Activated B cell treated with CpG ODN at 0.5 μM for 24 hours (primary cell): ENCODE measurements at regions of chr2 and their contacts with region 1.

Region 1: DNA sequence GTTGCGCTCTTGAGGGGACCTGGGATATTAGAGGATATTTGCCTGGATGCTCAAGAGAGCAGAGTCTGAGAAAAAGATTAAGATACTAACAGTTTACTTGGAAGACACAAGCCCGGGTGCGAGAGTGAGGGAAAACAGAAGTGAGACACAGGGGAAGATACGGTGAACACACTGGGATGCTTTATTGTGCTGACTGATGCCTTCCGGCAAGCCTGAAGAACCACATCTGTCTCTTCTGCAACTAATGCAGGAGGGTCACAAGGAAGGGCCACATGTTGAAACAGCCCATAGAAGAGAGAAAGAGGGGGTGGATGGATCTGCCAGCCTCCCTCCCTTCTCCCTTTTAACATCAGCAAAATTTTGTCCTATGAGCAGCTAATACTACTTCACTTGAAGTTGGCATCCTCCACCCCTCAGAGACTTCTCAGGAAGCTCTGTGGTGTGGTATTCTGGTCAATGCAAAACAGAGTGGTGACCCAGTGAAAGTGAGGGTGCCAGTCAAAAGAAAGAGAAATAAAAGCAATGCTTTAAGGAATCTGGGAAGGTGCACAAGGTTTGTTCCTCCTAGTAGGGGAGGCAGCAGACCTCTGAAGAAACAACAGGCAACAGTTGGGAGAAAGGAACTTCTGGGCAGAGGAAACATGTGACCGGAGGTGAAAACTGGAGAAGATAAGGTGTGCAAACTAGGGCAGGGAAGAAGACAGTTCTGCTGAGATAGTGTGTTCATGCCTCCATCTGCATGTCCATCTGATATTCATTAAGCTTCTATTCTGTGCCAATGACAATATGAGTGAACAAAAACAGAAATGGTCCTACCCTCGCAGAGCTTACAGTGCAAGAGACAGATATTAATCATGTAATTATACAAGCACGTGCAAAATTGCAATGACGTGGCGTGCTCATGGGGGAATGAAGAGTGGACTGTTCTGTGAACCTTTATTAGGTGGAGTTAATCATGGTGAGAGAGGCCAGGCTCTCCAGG is 107.1 kb downstream of the LYPD6B start:
- DNase-seq: no peak
- ATAC-seq: peak; percentile 47
- H3K4me3 Mint-ChIP-seq: peak overlapping the region; percentile 40
- H3K27ac Mint-ChIP-seq: no peak overlapping the region
- H3K4me1 Mint-ChIP-seq: peaks cover 15% of the 10 kb centered on the region
- H3K27me3 Mint-ChIP-seq: peaks cover 16% of the 10 kb centered on the region
- CTCF ChIP-seq: no peak

Region 2: GRCh38 chr2:149132339-149132738 is 13.3 kb before region 1 on chr2:
- CTCF ChIA-PET with region 1: no interaction called
- POLR2A ChIA-PET with region 1: no interaction called
- intact Hi-C with region 1: no loop called
- DNase-seq: no peak
- ATAC-seq: no peak
- H3K4me3 Mint-ChIP-seq: no peak overlapping the region
- H3K27ac Mint-ChIP-seq: no peak overlapping the region
- H3K4me1 Mint-ChIP-seq: peaks cover 5% of the 10 kb centered on the region
- H3K27me3 Mint-ChIP-seq: peaks cover 19% of the 10 kb centered on the region
- CTCF ChIP-seq: no peak

Region 3: DNA sequence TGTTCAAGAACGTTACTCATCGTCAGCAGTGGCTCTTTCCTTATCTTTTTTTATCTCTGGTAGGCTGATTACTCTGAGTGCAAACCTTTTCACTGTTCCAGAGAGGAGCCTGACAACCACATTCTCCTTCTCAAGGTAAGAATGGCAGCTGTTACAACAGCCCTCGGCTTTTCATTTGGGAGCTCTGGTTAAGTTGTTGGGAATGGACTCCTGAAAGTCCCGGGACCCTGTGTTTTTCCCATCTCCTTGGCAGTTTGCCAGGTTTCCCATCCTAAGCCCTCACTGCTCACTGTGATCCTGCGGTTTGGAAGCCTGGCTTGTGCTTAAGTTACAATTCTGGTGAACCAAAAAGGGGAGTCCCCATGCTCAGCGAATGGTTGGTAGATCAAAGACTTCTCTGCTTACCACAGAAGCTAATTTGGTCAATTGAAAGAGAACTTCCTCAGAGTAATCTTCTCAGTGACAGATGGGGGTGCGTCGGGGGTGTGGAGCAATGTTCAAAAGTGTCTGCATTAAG is 15.2 kb after region 1 on chr2:
- CTCF ChIA-PET with region 1: no interaction called
- POLR2A ChIA-PET with region 1: no interaction called
- intact Hi-C with region 1: loop called (anchors 1 kb)
- DNase-seq: no peak
- ATAC-seq: peak; percentile 77
- H3K4me3 Mint-ChIP-seq: no peak overlapping the region
- H3K27ac Mint-ChIP-seq: no peak overlapping the region
- H3K4me1 Mint-ChIP-seq: peaks cover 15% of the 10 kb centered on the region
- H3K27me3 Mint-ChIP-seq: peaks cover 30% of the 10 kb centered on the region
- CTCF ChIP-seq: no peak